MCF 10A (cell line): ENCODE measurements at regions of chr5 and their contacts with region 1.

Region 1: DNA sequence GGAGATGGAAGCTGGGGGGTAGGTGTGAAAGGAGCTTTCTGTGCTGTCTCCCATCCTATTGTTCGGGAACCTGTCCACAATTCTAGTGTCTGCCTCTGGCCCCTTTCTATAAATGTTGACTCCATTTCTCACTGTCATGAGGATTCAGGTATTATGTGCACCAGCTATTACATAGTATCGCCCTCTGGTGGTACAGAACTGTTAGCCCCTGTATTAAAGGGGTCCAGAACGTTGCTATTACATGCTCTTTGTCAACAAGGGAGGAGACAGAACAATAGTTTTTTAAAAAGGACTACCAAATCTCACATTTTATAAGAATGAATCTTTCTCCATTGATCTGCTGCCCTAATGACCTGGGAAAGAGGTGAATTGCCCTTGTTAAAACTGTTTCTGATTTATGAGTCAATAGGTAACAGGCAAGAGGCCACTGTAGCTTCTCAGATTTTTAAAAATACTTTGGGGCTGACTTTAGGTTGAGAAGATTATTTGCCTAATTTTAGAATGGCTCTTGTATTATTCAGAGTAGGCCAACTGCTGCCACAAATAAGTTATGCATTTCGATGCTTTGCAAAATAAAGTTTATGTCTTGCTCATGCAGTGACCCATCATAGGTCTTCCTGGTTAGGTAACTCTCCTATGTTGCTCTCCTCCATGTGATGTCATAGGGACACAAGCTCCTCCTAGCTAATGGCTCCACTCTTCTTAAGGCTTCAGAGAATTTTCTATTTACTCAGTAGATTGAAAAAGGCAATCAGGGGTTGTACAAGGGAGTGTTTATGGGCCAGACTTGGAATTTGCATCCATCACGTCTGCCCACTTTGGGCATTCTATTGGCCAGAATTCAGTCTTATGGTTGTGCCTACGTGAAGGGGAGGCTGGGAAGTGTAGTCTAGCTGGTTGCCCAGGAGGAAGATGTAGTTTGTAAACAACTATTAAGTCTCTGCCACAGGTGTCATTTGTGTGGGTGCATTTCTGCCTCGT is 20.8 kb downstream of the DCANP1 start:
- DNase-seq: peak; percentile 82
- H3K4me3 Mint-ChIP-seq: no peak overlapping the region
- H3K27ac Mint-ChIP-seq: no peak overlapping the region
- H3K4me1 Mint-ChIP-seq: no peaks in the 10 kb centered on the region
- H3K27me3 Mint-ChIP-seq: peaks cover 9% of the 10 kb centered on the region
- CTCF ChIP-seq: peak; percentile 81

Region 2: GRCh38 chr5:135332519-135333150 is 93.8 kb before region 1 on chr5:
- CTCF ChIA-PET with region 1: interaction called, 20 read pairs
- POLR2A ChIA-PET with region 1: no interaction called
- intact Hi-C with region 1: no loop called
- DNase-seq: peak; percentile 80
- H3K4me3 Mint-ChIP-seq: no peak overlapping the region
- H3K27ac Mint-ChIP-seq: no peak overlapping the region
- H3K4me1 Mint-ChIP-seq: peaks cover 14% of the 10 kb centered on the region
- H3K27me3 Mint-ChIP-seq: no peaks in the 10 kb centered on the region
- CTCF ChIP-seq: peak; percentile 75

Region 3: GRCh38 chr5:135379046-135379654 is 47.2 kb before region 1 on chr5:
- CTCF ChIA-PET with region 1: interaction called, 44 read pairs
- POLR2A ChIA-PET with region 1: interaction called, 4 read pairs
- intact Hi-C with region 1: no loop called
- DNase-seq: peak; percentile 61
- H3K4me3 Mint-ChIP-seq: no peak overlapping the region
- H3K27ac Mint-ChIP-seq: peak overlapping the region; percentile 62
- H3K4me1 Mint-ChIP-seq: peaks cover 33% of the 10 kb centered on the region
- H3K27me3 Mint-ChIP-seq: no peaks in the 10 kb centered on the region
- CTCF ChIP-seq: no peak

Region 4: GRCh38 chr5:135392256-135392655 is 34.1 kb before region 1 on chr5:
- CTCF ChIA-PET with region 1: interaction called, 44 read pairs
- POLR2A ChIA-PET with region 1: no interaction called
- intact Hi-C with region 1: loop called (anchors 5 kb)
- DNase-seq: no peak
- H3K4me3 Mint-ChIP-seq: no peak overlapping the region
- H3K27ac Mint-ChIP-seq: peak overlapping the region; percentile 89
- H3K4me1 Mint-ChIP-seq: peaks cover 81% of the 10 kb centered on the region
- H3K27me3 Mint-ChIP-seq: no peaks in the 10 kb centered on the region
- CTCF ChIP-seq: no peak

Region 5: DNA sequence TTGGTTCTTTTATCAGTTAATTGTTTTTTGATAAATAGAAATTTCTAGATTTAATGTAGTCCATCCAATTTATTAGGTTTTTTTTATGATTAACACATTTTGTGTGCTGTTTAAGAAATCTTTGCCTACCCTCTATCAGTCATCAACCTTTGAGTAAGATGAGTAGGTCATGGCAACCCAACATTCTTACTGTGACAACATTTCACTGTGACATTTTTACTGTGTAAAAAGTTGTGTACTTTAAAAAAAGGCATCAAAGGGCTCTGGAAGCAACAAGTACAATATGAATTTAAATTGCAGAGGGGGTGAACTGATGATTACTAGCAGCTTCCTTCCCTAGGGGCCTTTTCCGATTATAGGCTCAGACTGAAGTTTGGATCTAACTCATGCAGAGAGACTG is 16.0 kb before region 1 on chr5:
- CTCF ChIA-PET with region 1: interaction called, 30 read pairs
- POLR2A ChIA-PET with region 1: interaction called, 4 read pairs
- intact Hi-C with region 1: no loop called
- DNase-seq: no peak
- H3K4me3 Mint-ChIP-seq: no peak overlapping the region
- H3K27ac Mint-ChIP-seq: no peak overlapping the region
- H3K4me1 Mint-ChIP-seq: no peaks in the 10 kb centered on the region
- H3K27me3 Mint-ChIP-seq: peaks cover 55% of the 10 kb centered on the region
- CTCF ChIP-seq: no peak